ENCODE measurements at regions of chr11 and their contacts with region 1.

Region 1: GRCh38 chr11:36376888-36377758 is 81.0 kb downstream of the PRR5L start:
- DNase-seq: peak in 5 of 10 donors; percentile 27 to 73 (median 50)
- H3K4me3 ChIP-seq: peak overlapping the region; percentile 34 to 85 (median 69)
- H3K27ac ChIP-seq: peak overlapping the region in 50 of 59 donors; percentile 1 to 83 (median 62)
- H3K27me3 ChIP-seq: peaks cover 0 to 23% (median 0%) of the 10 kb centered on the region in 45 donors
- CTCF ChIP-seq: peak in 55 of 56 donors; percentile 11 to 79 (median 62)

Region 2: GRCh38 chr11:36289226-36289852 is 87.8 kb before region 1 on chr11 and contains the start of gene COMMD9:
- intact Hi-C with region 1: loop called in 1 of 2 experiments (anchors 10 kb)
- DNase-seq: peak; percentile 94 to 98 (median 97)
- H3K4me3 ChIP-seq: peak within 1 kb of the TSS; percentile 63 to 98 (median 81)
- H3K27ac ChIP-seq: peak within 1 kb of the TSS; percentile 7 to 94 (median 87)
- H3K27me3 ChIP-seq: no peaks in the 10 kb centered on the region
- CTCF ChIP-seq: peak in 42 of 56 donors; percentile 3 to 63 (median 33)
- total RNA-seq, gene COMMD9: 43.1 to 107 (median 76.9) TPM

Region 3: DNA sequence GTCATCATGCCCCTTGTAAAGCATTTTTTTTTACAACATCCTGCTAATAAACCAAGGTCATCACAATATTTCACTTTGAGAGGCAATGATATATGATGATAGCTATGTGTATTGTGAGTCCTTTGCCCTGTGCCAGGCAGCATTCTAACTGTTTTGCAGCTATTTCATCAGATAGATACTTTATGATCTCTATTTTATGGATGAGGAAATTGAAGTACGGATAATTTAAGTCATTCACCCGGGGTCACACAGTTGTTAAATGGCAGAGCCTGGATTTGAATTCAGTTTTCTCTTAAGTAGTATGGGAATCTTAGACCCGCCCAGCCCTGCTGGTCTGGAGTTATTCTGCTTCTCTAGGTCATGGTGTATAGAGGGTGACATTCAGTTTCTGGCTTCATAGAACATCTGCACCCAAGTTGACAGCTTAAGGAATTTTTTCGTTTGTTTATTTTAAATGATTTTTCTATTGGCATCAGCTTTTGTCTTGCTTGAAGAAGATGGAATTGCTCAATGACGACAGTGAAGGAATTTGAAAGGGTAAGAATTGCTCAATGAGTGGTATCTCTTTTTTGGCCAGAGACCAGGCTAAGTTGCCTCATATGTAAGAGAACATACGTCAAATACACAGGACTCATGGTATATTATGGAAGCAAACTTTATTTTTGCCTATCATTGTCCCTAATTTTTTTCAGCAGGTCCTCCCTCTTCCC is 80.1 kb before region 1 on chr11:
- intact Hi-C with region 1: loop called (anchors 5 to 10 kb)
- DNase-seq: no peak
- H3K4me3 ChIP-seq: peak overlapping the region in 58 of 59 donors; percentile 1 to 79 (median 48)
- H3K27ac ChIP-seq: peak overlapping the region in 57 of 59 donors; percentile 28 to 99 (median 93)
- H3K27me3 ChIP-seq: no peaks in the 10 kb centered on the region
- CTCF ChIP-seq: no peak

Region 4: GRCh38 chr11:36431429-36432092 is 54.4 kb after region 1 on chr11:
- intact Hi-C with region 1: loop called in 1 of 2 experiments (anchors 5 kb)
- DNase-seq: no peak
- H3K4me3 ChIP-seq: peak overlapping the region in 9 of 59 donors; percentile 0 to 31 (median 4)
- H3K27ac ChIP-seq: peak overlapping the region in 52 of 59 donors; percentile 1 to 88 (median 64)
- H3K27me3 ChIP-seq: no peaks in the 10 kb centered on the region
- CTCF ChIP-seq: peak in 1 of 56 donors; percentile 16

Region 5: GRCh38 chr11:36447972-36448371 is 70.8 kb after region 1 on chr11:
- intact Hi-C with region 1: loop called in 1 of 2 experiments (anchors 5 kb)
- DNase-seq: no peak
- H3K4me3 ChIP-seq: no peak overlapping the region
- H3K27ac ChIP-seq: no peak overlapping the region
- H3K27me3 ChIP-seq: no peaks in the 10 kb centered on the region
- CTCF ChIP-seq: no peak

Measured in dorsolateral prefrontal cortex (tissue), 120 donors.